Activated CD8-positive, alpha-beta T cell treated with anti-CD3 and anti-CD28 coated beads, Interleukin-2, amount 10 ng/mL, durations not matched to agents 7 days and 5 days (primary cell): ENCODE measurements at regions of chr2 and their contacts with region 1.

Region 1: DNA sequence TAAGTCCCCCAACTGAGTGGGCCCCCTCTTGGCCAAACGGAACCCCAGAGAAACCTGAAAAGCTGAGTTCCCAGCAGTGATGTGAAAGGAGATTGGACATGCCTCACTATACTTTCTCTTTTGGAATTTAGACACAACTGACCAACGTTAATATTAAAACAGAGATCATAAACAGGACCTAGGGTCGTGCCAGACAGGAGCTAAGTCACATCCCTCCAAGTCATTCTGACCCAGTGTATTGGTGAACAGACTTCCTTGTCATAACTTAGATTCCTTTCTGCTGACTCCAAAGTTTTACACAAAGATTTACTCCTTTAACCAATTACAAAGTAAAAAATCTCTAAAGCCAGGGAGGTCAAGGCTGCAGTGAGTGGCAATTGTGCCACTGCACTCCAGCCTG is 46.9 kb downstream of the UXS1 start:
- DNase-seq: no peak
- ATAC-seq: no peak
- H3K4me3 Mint-ChIP-seq: peak overlapping the region; percentile 46
- H3K27ac Mint-ChIP-seq: peak overlapping the region; percentile 87
- H3K4me1 Mint-ChIP-seq: peaks cover 85% of the 10 kb centered on the region
- H3K27me3 Mint-ChIP-seq: no peaks in the 10 kb centered on the region

Region 2: GRCh38 chr2:106193977-106194778 is 47.0 kb after region 1 on chr2 and contains the start of gene UXS1:
- CTCF ChIA-PET with region 1: no interaction called
- POLR2A ChIA-PET with region 1: interaction called, 12 read pairs
- DNase-seq: peak; percentile 99
- ATAC-seq: peak; percentile 84
- H3K4me3 Mint-ChIP-seq: peak within 1 kb of the TSS; percentile 88
- H3K27ac Mint-ChIP-seq: peak within 1 kb of the TSS; percentile 86
- H3K4me1 Mint-ChIP-seq: peaks cover 44% of the 10 kb centered on the region
- H3K27me3 Mint-ChIP-seq: peaks cover 2% of the 10 kb centered on the region
- total RNA-seq, gene UXS1: 95.3 to 100 TPM